HCT116 (cell line): ENCODE measurements at regions of chr6 and their contacts with region 1.

Region 1: DNA sequence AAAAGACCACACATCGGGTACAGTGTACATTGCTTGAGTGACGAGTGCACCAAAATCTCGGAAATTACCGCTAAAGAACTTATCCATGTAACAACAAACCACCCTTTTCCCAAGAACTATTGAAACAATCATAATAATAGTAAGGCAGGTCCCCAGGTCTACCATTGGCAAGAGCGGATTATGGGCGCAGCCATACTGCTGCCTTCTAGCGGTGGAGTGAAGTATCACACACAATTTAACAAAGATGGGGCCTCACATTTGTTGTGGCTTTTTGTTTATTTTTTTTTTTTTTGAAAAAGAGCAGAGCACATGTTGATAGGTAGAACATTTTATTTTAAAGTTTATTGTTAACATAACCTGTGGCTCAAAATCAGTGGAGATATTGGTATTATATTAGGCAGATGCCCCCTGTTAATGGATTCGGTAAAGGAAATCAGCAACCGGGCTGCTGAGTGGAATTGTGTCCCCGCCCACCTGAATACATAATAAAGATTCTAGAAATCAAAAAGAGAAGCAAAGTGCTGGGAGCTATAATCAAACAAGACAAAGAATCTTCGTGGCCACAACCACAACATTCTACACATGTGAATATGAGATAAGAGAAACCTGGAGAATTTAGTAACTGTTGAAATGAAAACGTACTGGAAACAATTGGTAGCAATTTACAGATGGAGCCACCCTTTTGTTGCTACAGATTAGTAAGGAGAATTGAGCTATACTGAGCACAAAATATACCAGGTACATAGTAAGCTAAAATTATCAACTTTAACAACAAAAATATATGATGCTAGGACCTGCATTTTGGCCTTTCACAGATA is 94.2 kb upstream of the EXOC2 start:
- DNase-seq: peak; percentile 19
- ATAC-seq: peak; percentile 89
- H3K4me3 ChIP-seq: no peak overlapping the region
- H3K27ac ChIP-seq: no peak overlapping the region
- H3K4me1 ChIP-seq: no peaks in the 10 kb centered on the region
- H3K27me3 ChIP-seq: no peaks in the 10 kb centered on the region
- CTCF ChIP-seq: peak; percentile 64 to 88 (median 75); a peak in 5 of 6 replicates
- POLR2A ChIP-seq: no peak
- RAD21 ChIP-seq: peak; percentile 50

Region 2: DNA sequence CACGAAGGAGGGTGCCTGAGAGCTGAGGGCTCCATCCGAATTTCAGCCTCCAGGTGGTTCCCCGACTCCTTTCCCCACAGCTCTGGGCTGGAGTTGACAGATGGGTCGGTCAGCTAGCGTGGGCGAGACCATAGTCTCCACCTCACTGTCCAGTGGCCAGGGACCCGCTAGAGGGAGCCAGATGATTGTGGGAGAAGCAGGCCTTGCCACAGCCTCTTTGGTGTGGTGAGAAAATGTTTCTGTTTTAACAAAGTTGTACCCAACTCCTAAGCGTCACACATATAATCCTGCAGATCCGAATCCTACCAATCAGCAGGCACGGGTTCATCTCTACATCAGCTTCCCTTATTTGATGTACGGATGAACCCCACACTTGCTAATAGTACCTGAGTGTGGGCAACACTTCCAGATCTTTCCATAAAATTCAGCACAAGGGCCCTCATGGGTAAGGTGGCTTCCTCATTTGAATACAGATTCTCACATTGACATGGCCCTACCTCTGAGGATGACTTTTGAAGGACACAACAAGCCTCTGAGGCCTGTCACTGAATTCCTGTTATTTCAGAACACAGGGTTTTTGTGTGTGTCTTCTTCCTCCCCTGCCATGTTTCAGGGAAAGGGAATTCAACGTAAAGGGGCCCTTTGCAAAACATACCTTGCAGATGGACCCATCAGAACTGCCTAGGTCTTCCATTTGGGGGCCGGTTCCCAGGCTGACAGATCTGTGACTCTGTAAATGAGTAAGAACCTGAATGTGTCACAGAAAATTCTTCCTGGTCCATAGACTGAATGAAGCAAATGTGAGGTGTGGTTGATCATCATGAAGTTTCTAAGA is 598.1 kb before region 1 on chr6:
- CTCF ChIA-PET with region 1: no interaction called
- POLR2A ChIA-PET with region 1: no interaction called
- RAD21 ChIA-PET with region 1: no interaction called
- intact Hi-C with region 1: loop called (anchors 5 kb)
- DNase-seq: peak; percentile 72
- ATAC-seq: peak; percentile 98
- H3K4me3 ChIP-seq: no peak overlapping the region
- H3K27ac ChIP-seq: no peak overlapping the region
- H3K4me1 ChIP-seq: no peaks in the 10 kb centered on the region
- H3K27me3 ChIP-seq: no peaks in the 10 kb centered on the region
- CTCF ChIP-seq: peak; percentile 93 to 95 (median 95)
- POLR2A ChIP-seq: no peak
- RAD21 ChIP-seq: peak; percentile 95

Region 3: DNA sequence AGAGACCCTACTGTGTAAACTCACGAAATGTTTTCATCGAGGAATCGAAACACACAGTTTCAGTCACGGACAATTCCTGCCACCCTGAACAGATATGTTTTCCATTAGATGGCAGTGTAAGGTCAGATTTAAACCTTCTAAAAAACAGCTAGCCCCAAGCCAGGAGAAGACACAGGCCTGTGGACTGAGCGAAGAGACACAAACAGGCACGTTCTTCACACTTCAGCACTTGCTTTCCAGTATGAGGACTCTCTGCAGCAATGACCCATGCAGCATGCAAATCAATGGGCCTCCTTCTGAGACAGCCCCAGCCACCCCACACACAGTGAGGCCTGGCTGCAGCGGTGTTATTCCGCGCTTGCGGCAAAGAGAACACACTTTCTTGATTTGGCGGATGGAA is 162.2 kb before region 1 on chr6:
- CTCF ChIA-PET with region 1: no interaction called
- POLR2A ChIA-PET with region 1: no interaction called
- RAD21 ChIA-PET with region 1: no interaction called
- intact Hi-C with region 1: loop called (anchors 10 kb)
- DNase-seq: no peak
- ATAC-seq: no peak
- H3K4me3 ChIP-seq: no peak overlapping the region
- H3K27ac ChIP-seq: no peak overlapping the region
- H3K4me1 ChIP-seq: no peaks in the 10 kb centered on the region
- H3K27me3 ChIP-seq: no peaks in the 10 kb centered on the region
- CTCF ChIP-seq: peak in 2 of 3 experiments; percentile 6 to 28; a peak in 1 of 6 replicates
- POLR2A ChIP-seq: no peak
- RAD21 ChIP-seq: peak; percentile 24; the same call in 1 of the 2 replicates

Region 4: DNA sequence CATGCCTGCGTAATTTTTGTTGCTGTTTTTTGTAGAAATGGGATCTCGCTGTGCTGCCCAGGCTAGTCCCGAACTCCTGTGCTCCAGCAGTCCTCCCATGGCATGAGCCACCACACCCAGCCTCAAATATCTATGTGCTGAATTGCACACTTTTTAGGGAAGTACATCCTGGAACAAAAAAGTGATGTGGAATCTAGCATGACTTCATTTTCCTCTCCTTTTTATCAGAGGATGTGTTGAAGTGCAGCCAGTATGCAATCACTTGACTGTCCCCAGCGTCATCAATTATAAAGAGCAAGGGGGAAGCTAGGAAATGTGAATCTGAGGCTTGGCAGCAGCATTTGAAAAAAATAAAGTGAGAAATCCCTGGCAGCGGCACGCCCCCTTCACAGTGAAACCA is 87.8 kb before region 1 on chr6:
- CTCF ChIA-PET with region 1: no interaction called
- POLR2A ChIA-PET with region 1: no interaction called
- RAD21 ChIA-PET with region 1: no interaction called
- intact Hi-C with region 1: no loop called
- DNase-seq: no peak
- ATAC-seq: no peak
- H3K4me3 ChIP-seq: no peak overlapping the region
- H3K27ac ChIP-seq: no peak overlapping the region
- H3K4me1 ChIP-seq: no peaks in the 10 kb centered on the region
- H3K27me3 ChIP-seq: peaks cover 17% of the 10 kb centered on the region
- CTCF ChIP-seq: no peak
- POLR2A ChIP-seq: no peak
- RAD21 ChIP-seq: no peak

Region 5: DNA sequence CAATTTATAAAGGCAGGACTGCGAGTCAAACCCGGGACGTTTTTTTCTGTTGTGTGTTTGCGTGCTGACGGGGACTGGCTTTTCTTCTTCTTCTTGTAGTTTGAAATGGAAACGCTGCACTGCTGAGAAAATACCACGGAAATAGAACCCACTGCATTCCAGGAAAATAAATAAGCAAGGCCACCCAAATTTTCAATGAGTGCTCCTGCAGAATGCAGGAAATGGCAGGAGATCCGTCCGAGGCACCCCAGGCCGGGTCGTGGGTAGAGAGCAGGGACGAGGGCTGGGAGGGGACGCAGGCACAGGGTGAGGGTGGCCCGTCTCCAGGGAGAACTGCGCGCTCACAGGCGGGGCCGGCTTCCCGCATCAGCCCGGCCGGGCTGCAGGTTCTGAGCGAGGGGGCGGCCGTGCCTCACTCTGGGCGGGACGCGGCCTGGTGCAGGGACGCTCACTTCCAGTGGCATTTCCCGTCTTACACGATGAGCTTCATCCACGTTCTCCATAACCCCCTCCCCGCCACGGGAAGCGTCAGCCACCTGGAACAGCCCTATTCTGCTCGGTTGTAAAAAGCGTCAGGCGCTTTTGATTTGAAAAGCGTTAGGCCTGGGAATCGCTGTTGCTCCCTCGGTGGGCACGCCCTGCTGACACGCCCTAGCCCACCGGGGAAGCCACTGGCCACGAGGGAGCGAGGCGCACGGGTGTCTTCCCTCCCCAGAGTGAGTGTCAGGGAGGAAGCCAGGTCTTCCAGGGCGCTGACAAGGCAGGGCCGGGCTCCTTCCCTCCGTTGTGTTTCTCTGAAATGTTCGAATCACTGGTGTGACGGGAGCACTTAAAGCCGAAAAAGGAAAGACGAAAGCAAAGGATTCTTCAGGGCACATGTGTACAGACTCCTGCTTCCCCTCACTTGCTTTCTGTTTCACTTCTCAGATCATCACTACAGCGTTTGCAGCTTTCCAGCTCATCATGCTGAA is 76.3 kb before region 1 on chr6:
- CTCF ChIA-PET with region 1: no interaction called
- POLR2A ChIA-PET with region 1: no interaction called
- RAD21 ChIA-PET with region 1: no interaction called
- intact Hi-C with region 1: no loop called
- DNase-seq: no peak
- ATAC-seq: no peak
- H3K4me3 ChIP-seq: no peak overlapping the region
- H3K27ac ChIP-seq: no peak overlapping the region
- H3K4me1 ChIP-seq: no peaks in the 10 kb centered on the region
- H3K27me3 ChIP-seq: peaks cover 13% of the 10 kb centered on the region
- CTCF ChIP-seq: no peak
- POLR2A ChIP-seq: no peak
- RAD21 ChIP-seq: no peak

Region 6: GRCh38 chr6:1222728-1223595 is 435.8 kb after region 1 on chr6:
- CTCF ChIA-PET with region 1: no interaction called
- POLR2A ChIA-PET with region 1: no interaction called
- RAD21 ChIA-PET with region 1: no interaction called
- intact Hi-C with region 1: no loop called
- DNase-seq: no peak
- ATAC-seq: no peak
- H3K4me3 ChIP-seq: no peak overlapping the region
- H3K27ac ChIP-seq: no peak overlapping the region
- H3K4me1 ChIP-seq: no peaks in the 10 kb centered on the region
- H3K27me3 ChIP-seq: no peaks in the 10 kb centered on the region
- CTCF ChIP-seq: no peak
- POLR2A ChIP-seq: no peak
- RAD21 ChIP-seq: no peak